CD8-positive, alpha-beta T cell (primary cell): ENCODE measurements at regions of chr1 and their contacts with region 1.

Region 1: GRCh38 chr1:169694304-169695075 is 16.9 kb downstream of the SELL start:
- DNase-seq: peak in 7 of 9 experiments; percentile 19 to 88 (median 58)
- ATAC-seq: peak; percentile 59
- H3K4me3 ChIP-seq: no peak overlapping the region
- H3K4me3 Mint-ChIP-seq: peak overlapping the region; percentile 60
- H3K27ac ChIP-seq: peak overlapping the region; percentile 50 to 74
- H3K27ac Mint-ChIP-seq: no peak overlapping the region
- H3K4me1 ChIP-seq: peaks cover 96% of the 10 kb centered on the region
- H3K4me1 Mint-ChIP-seq: peaks cover 71% of the 10 kb centered on the region
- H3K27me3 ChIP-seq: no peaks in the 10 kb centered on the region
- H3K27me3 Mint-ChIP-seq: no peaks in the 10 kb centered on the region
- CTCF ChIP-seq: peak; percentile 50

Region 2: DNA sequence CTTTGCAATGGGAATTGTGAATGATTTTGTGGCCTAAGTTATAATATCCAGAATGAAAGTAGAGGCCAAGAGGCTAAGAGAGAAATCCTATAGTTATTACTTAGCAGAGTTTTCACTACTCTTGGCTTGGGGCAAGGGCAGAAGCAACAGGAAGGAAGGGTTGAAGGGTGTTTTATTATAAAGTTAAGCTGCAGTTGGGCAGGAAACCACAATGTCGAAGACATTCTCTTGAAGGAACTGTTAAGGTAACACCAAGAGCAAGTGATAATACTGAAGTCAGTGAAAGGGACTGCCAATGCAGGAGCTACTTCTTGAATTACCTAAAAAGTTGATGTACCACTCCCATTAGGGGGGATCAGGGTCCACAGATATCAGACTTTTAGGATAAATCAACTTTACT is 1159.0 kb before region 1 on chr1:
- CTCF ChIA-PET with region 1: no interaction called
- POLR2A ChIA-PET with region 1: no interaction called
- intact Hi-C with region 1: loop called in 1 of 2 experiments (anchors 10 kb)
- DNase-seq: peak in 3 of 9 experiments; percentile 40 to 84 (median 71)
- ATAC-seq: peak; percentile 79
- H3K4me3 ChIP-seq: peak overlapping the region; percentile 13 to 19
- H3K4me3 Mint-ChIP-seq: peak overlapping the region; percentile 54
- H3K27ac ChIP-seq: peak overlapping the region; percentile 37 to 77
- H3K27ac Mint-ChIP-seq: peak overlapping the region; percentile 83
- H3K4me1 ChIP-seq: peaks cover 66% of the 10 kb centered on the region
- H3K4me1 Mint-ChIP-seq: peaks cover 90% of the 10 kb centered on the region
- H3K27me3 ChIP-seq: no peaks in the 10 kb centered on the region
- H3K27me3 Mint-ChIP-seq: no peaks in the 10 kb centered on the region
- CTCF ChIP-seq: no peak

Region 3: DNA sequence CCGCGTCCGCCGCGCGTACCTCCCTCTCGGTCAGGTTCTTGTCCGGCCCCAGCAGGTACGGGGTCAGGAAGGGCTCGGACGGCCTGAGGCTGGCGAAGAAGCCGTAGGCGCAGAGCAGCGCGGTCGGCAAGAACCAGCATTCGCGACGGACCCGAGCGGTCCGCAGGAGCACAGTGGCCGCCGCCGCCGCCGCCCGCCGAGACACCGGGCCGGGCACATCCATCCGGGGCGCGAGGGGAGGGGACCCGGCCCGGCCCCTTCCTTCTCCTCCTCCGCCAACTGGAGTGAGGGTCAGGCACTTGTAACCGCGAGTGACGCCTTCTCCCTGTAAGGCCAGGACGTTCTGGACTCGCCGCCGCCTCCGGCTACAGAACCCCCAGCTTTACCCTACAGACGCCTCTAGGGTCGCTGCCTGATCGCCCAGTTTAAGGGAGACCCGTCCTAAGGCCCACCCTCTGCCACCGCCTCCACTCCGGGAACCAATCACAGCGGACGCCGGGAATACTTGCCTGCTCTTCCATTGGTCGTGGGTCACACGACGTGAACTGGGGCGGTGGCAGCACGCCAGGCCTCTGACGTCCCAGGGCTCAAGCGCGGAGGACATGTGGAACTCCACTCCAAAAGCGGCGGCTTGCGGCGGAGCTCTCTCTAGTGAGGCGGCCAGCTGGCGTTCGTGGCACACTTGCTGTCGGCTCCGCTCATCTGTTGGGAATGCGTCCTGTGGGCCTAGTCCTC is 208.8 kb before region 1 on chr1 and contains the start of gene SLC19A2:
- CTCF ChIA-PET with region 1: no interaction called
- POLR2A ChIA-PET with region 1: no interaction called
- intact Hi-C with region 1: loop called in 1 of 2 experiments (anchors 5 kb)
- DNase-seq: peak; percentile 84 to 97 (median 93)
- ATAC-seq: peak; percentile 98
- H3K4me3 ChIP-seq: peak within 1 kb of the TSS; percentile 69 to 79
- H3K4me3 Mint-ChIP-seq: peak within 1 kb of the TSS; percentile 97
- H3K27ac ChIP-seq: peak within 1 kb of the TSS; percentile 73 to 79
- H3K27ac Mint-ChIP-seq: peak within 1 kb of the TSS; percentile 95
- H3K4me1 ChIP-seq: peaks cover 20% of the 10 kb centered on the region
- H3K4me1 Mint-ChIP-seq: peaks cover 43% of the 10 kb centered on the region
- H3K27me3 ChIP-seq: no peaks in the 10 kb centered on the region
- H3K27me3 Mint-ChIP-seq: no peaks in the 10 kb centered on the region
- CTCF ChIP-seq: no peak
- total RNA-seq, gene SLC19A2: 4.7 to 6.1 TPM

Region 4: GRCh38 chr1:169601093-169601881 is 93.2 kb before region 1 on chr1:
- CTCF ChIA-PET with region 1: interaction called, 170 read pairs
- POLR2A ChIA-PET with region 1: interaction called, 102 read pairs
- intact Hi-C with region 1: loop called (anchors 1 kb)
- DNase-seq: peak in 2 of 9 experiments; percentile 45 to 61
- ATAC-seq: no peak
- H3K4me3 ChIP-seq: no peak overlapping the region
- H3K4me3 Mint-ChIP-seq: no peak overlapping the region
- H3K27ac ChIP-seq: peak overlapping the region in 1 of 2 experiments; percentile 3
- H3K27ac Mint-ChIP-seq: peak overlapping the region; percentile 53
- H3K4me1 ChIP-seq: peaks cover 54% of the 10 kb centered on the region
- H3K4me1 Mint-ChIP-seq: peaks cover 54% of the 10 kb centered on the region
- H3K27me3 ChIP-seq: no peaks in the 10 kb centered on the region
- H3K27me3 Mint-ChIP-seq: no peaks in the 10 kb centered on the region
- CTCF ChIP-seq: peak; percentile 67

Region 5: DNA sequence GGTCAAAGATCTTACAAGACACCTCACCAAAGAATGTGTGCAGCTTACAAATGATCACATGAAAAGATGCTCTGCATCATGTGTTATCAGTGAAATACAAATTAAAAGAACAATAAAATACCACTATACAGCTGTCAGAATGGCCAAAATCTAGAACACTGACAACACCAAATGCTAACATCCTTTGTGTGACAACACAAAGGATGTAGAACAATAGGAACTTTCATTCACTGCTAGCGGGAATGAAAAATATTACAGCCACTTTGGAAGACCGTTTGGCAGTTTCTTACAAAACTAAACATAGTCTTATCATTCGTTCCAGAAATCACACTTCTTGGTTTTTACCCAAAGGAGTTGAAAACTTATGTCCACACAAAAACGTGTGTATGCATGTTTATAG is 43.9 kb before region 1 on chr1:
- CTCF ChIA-PET with region 1: interaction called, 6 read pairs
- POLR2A ChIA-PET with region 1: interaction called, 4 read pairs
- intact Hi-C with region 1: loop called in 1 of 2 experiments (anchors 5 kb)
- DNase-seq: no peak
- ATAC-seq: no peak
- H3K4me3 ChIP-seq: no peak overlapping the region
- H3K4me3 Mint-ChIP-seq: no peak overlapping the region
- H3K27ac ChIP-seq: no peak overlapping the region
- H3K27ac Mint-ChIP-seq: no peak overlapping the region
- H3K4me1 ChIP-seq: peaks cover 27% of the 10 kb centered on the region
- H3K4me1 Mint-ChIP-seq: peaks cover 52% of the 10 kb centered on the region
- H3K27me3 ChIP-seq: no peaks in the 10 kb centered on the region
- H3K27me3 Mint-ChIP-seq: no peaks in the 10 kb centered on the region
- CTCF ChIP-seq: no peak